Activated CD8-positive, alpha-beta memory T cell treated with anti-CD3 and anti-CD28 coated beads, Interleukin-2, amount 10 ng/mL, durations not matched to agents 7 days and 5 days (primary cell): ENCODE measurements at regions of chr6 and their contacts with region 1.

Region 1: DNA sequence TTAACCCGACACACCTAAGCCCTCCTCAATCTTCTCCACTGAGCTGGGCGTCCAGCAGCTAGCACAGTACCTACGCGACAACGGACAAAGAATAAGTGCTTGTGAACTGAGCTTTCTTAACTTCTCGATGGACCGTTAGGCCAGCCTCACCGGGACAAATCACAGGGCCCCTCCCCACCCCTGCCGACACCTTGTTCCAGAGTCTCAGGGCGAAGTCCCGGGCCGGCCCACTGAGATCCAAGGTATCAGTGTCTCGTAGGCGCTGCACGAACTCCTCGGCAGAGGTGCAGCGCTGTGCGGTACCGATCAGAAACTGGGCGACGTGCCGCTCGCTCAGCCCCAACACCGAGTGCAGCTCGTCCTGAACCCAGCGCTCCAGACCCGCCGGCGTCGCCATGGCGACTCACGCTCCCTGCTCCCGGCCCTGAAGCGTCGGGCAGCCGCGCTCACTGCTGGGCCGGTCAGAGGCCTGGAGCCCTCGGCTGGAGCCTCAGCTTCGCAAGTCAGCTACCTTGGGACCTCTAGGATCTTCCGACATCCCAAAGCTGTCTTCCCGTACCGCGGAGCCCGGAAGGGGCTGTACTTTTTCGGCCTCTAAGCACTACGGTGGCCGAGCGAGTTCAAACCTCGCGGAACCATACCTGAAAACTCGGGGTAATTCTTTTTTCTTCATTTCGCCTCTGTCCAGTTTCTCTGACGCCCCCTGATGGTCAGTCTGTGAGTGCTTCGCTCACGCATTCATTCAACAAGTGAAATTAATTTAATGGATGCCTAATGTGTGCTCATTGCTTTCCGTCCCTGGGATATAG is at the start of gene DHX16:
- DNase-seq: peak; percentile 95
- ATAC-seq: peak; percentile 85
- H3K4me3 Mint-ChIP-seq: peak within 1 kb of the TSS; percentile 94
- H3K27ac Mint-ChIP-seq: peak within 1 kb of the TSS; percentile 79
- H3K4me1 Mint-ChIP-seq: peaks cover 38% of the 10 kb centered on the region
- H3K27me3 Mint-ChIP-seq: no peaks in the 10 kb centered on the region
- total RNA-seq, gene DHX16: 39.5 to 49.6 TPM

Region 2: GRCh38 chr6:30656513-30656912 is 16.1 kb before region 1 on chr6:
- CTCF ChIA-PET with region 1: interaction called, 10 read pairs
- DNase-seq: no peak
- ATAC-seq: no peak
- H3K4me3 Mint-ChIP-seq: no peak overlapping the region
- H3K27ac Mint-ChIP-seq: no peak overlapping the region
- H3K4me1 Mint-ChIP-seq: peaks cover 2% of the 10 kb centered on the region
- H3K27me3 Mint-ChIP-seq: no peaks in the 10 kb centered on the region

Region 3: DNA sequence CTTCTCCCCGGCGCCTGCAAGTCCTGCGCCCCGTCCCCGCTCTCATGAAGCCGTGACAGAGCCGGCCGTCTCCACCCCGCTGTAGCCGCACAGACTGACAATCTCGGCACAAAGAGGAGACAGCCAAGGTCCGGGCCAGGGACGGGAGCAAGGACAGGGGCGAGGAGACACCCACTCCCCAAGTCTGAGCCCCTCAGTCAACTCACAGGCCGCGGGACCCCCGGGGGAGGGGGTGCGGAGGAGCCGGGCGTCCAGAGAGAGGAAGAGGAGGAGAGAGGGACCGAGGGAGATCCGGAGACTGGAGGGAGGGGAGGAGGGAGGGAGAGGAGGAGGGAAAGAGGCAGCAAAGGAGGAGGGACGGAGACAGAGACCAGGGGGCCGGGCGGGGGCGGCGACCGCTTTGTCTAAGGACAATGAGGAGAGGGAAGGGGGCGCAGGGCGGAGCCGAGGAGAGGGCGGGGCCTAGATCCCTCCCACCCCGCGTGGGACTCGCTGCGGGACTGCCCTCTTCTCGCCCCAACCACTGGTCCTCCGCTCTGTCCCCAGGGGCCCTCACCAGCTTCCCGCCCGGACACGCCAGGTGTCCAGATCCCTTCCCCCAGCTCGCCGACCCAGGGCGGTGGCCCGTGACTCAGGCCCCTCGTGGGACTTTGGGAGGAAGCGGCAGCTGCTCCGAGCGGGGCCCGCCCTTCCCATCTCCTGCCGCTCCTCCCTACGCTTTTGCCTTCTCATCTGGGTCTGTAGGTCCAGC is 14.4 kb after region 1 on chr6:
- CTCF ChIA-PET with region 1: interaction called, 10 read pairs
- DNase-seq: peak; percentile 88
- ATAC-seq: peak; percentile 37
- H3K4me3 Mint-ChIP-seq: peak overlapping the region; percentile 90
- H3K27ac Mint-ChIP-seq: peak overlapping the region; percentile 87
- H3K4me1 Mint-ChIP-seq: peaks cover 38% of the 10 kb centered on the region
- H3K27me3 Mint-ChIP-seq: no peaks in the 10 kb centered on the region

Region 4: DNA sequence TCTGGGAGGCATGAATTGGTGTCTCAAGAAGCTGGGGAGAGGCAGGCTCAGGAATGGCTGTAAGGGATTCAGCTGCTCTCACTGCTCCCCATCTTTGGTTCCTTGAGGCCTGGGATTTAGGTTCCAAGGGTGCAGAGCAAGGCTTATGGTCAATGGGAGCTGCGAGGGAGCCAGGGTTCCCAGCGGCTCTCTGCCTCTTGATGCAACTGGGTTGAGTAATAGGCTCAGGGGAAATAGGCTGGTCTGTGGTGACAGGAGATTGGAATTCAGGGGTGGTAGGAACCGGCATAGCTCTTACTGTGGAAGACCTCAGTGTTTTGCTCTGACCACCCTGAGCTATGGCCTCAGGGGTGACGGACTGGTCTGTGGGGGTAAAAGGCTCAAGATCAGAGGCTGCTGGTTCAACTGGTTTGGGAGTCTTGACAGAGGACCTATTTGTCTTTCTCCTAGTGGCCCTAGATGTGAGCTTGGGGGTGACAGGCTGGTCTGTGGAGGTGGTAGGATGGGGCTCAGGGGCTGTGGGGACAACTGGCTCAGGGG is 31.2 kb after region 1 on chr6:
- CTCF ChIA-PET with region 1: no interaction called
- DNase-seq: no peak
- ATAC-seq: no peak
- H3K4me3 Mint-ChIP-seq: no peak overlapping the region
- H3K27ac Mint-ChIP-seq: no peak overlapping the region
- H3K4me1 Mint-ChIP-seq: no peaks in the 10 kb centered on the region
- H3K27me3 Mint-ChIP-seq: no peaks in the 10 kb centered on the region